Activated CD4-positive, alpha-beta memory T cell treated with anti-CD3 and anti-CD28 coated beads, Interleukin-2, amount 10 ng/mL, durations not matched to agents 7 days and 5 days (primary cell): ENCODE measurements at regions of chr13 and their contacts with region 1.

Region 1: DNA sequence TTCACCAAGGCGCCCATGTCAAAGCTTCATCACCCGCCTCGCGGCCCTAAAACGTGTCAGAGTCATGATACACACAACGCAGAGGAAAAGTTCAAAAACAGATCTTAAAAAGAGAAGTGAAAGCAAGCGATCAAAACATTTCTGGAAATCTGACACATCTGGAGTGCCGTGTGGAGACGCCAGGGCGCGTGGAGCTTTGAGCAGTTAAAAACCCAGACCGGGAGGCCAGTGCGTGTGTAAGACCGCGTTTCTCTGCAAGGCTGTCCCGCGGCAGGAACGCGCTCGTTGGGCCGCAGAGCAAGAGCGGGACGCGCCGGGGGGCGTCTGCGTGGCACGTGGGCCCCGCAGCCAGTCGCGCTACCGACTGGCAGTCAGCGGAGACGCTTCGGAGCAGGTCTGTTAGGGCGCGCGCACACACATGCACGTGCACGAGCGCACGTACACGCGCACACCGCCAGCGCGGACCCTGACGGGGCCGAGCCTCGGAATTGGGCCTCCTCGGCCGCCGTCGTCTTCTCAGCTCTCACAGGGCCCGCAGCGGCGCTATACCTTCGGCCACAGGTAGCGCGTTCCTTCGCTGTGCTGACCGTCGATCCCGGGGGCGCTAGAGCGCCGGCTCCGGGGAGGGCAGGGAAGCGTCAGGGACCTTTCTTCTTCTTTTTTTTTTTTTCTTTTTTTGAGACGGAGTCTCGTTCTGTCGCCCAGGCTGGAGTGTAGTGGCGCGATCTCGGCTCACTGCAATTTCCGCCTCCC is 35.8 kb downstream of the RNF6 start:
- DNase-seq: peak; percentile 91
- H3K4me3 Mint-ChIP-seq: peak overlapping the region; percentile 81
- H3K27ac Mint-ChIP-seq: peak overlapping the region; percentile 83
- H3K4me1 Mint-ChIP-seq: peaks cover 20% of the 10 kb centered on the region
- H3K27me3 Mint-ChIP-seq: no peaks in the 10 kb centered on the region

Region 2: GRCh38 chr13:26216042-26216441 is 29.7 kb after region 1 on chr13:
- CTCF ChIA-PET with region 1: interaction called, 32 read pairs
- POLR2A ChIA-PET with region 1: interaction called, 55 read pairs
- DNase-seq: no peak
- H3K4me3 Mint-ChIP-seq: no peak overlapping the region
- H3K27ac Mint-ChIP-seq: no peak overlapping the region
- H3K4me1 Mint-ChIP-seq: peaks cover 23% of the 10 kb centered on the region
- H3K27me3 Mint-ChIP-seq: no peaks in the 10 kb centered on the region

Region 3: DNA sequence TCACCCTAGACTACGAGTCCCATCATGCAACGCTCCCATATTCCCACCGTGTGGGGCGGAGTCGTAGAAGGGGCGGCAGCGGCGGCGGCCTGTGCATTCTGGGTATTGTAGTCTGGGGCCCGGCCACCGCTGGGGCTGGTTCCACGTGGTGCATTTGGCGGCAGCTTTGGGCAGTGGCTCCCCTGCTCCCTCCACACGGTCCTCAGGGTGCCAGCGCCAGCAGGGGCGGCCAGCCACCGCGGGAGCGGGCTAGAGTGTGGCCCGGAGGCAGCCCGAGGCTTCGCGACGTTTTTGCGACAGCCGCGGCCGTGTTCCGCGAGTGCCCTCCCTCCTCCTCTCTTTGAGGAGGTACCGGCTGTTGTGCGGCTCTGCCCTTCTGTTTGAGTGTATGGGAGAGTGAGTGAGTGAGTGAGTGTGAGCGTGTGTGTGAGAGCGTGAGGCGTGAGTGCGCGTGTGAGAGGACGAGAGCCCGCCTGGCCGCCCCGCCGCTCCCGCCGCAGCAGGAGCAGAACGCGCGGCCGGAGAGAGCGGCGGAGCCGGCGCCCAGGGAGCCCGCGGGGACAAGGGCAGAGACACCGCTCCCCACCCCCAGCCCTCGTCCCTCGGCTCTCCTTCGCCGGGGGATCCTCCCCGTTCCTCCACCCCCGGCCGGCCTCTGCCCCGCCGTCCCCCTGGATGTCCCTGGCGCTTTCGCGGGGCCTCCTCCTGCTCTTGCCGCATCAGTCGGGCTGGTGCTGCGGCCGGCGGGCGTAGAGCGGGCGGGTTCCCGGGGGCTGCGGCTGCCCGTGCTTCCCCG is 67.7 kb after region 1 on chr13 and contains the start of gene CDK8:
- CTCF ChIA-PET with region 1: interaction called, 13 read pairs
- POLR2A ChIA-PET with region 1: interaction called, 4 read pairs
- DNase-seq: peak; percentile 88
- H3K4me3 Mint-ChIP-seq: peak within 1 kb of the TSS; percentile 85
- H3K27ac Mint-ChIP-seq: peak within 1 kb of the TSS; percentile 78
- H3K4me1 Mint-ChIP-seq: peaks cover 26% of the 10 kb centered on the region
- H3K27me3 Mint-ChIP-seq: no peaks in the 10 kb centered on the region
- total RNA-seq, gene CDK8: 13.7 to 13.9 TPM

Region 4: GRCh38 chr13:26498656-26499591 is 312.6 kb after region 1 on chr13:
- CTCF ChIA-PET with region 1: interaction called, 137 read pairs
- POLR2A ChIA-PET with region 1: interaction called, 29 read pairs
- DNase-seq: no peak
- H3K4me3 Mint-ChIP-seq: no peak overlapping the region
- H3K27ac Mint-ChIP-seq: no peak overlapping the region
- H3K4me1 Mint-ChIP-seq: no peaks in the 10 kb centered on the region
- H3K27me3 Mint-ChIP-seq: peaks cover 3% of the 10 kb centered on the region

Region 5: GRCh38 chr13:26698392-26699196 is 512.3 kb after region 1 on chr13:
- CTCF ChIA-PET with region 1: interaction called, 84 read pairs
- POLR2A ChIA-PET with region 1: interaction called, 6 read pairs
- DNase-seq: peak; percentile 80
- H3K4me3 Mint-ChIP-seq: no peak overlapping the region
- H3K27ac Mint-ChIP-seq: no peak overlapping the region
- H3K4me1 Mint-ChIP-seq: peaks cover 3% of the 10 kb centered on the region
- H3K27me3 Mint-ChIP-seq: peaks cover 12% of the 10 kb centered on the region